Vagina (tissue), 2 donors: ENCODE measurements at regions of chrX and their contacts with region 1.

Region 1: GRCh38 chrX:68710870-68711576 is 63.6 kb downstream of the STARD8 start:
- DNase-seq: no peak
- H3K4me3 ChIP-seq: no peak overlapping the region
- H3K27ac ChIP-seq: no peak overlapping the region
- H3K4me1 ChIP-seq: no peaks in the 10 kb centered on the region
- H3K27me3 ChIP-seq: no peaks in the 10 kb centered on the region
- CTCF ChIP-seq: peak in 1 of 3 experiments; percentile 47
- POLR2A ChIP-seq: no peak

Region 2: GRCh38 chrX:68511255-68511654 is 199.8 kb before region 1 on chrX:
- intact Hi-C with region 1: loop called (anchors 10 kb)
- DNase-seq: no peak
- H3K4me3 ChIP-seq: no peak overlapping the region
- H3K27ac ChIP-seq: no peak overlapping the region
- H3K4me1 ChIP-seq: no peaks in the 10 kb centered on the region
- H3K27me3 ChIP-seq: no peaks in the 10 kb centered on the region
- CTCF ChIP-seq: peak; percentile 43 to 59 (median 58)
- POLR2A ChIP-seq: no peak

Region 3: GRCh38 chrX:68644861-68645260 is 66.2 kb before region 1 on chrX:
- intact Hi-C with region 1: no loop called
- DNase-seq: no peak
- H3K4me3 ChIP-seq: no peak overlapping the region
- H3K27ac ChIP-seq: no peak overlapping the region
- H3K4me1 ChIP-seq: peaks cover 7% of the 10 kb centered on the region
- H3K27me3 ChIP-seq: no peaks in the 10 kb centered on the region
- CTCF ChIP-seq: no peak
- POLR2A ChIP-seq: no peak

Region 4: DNA sequence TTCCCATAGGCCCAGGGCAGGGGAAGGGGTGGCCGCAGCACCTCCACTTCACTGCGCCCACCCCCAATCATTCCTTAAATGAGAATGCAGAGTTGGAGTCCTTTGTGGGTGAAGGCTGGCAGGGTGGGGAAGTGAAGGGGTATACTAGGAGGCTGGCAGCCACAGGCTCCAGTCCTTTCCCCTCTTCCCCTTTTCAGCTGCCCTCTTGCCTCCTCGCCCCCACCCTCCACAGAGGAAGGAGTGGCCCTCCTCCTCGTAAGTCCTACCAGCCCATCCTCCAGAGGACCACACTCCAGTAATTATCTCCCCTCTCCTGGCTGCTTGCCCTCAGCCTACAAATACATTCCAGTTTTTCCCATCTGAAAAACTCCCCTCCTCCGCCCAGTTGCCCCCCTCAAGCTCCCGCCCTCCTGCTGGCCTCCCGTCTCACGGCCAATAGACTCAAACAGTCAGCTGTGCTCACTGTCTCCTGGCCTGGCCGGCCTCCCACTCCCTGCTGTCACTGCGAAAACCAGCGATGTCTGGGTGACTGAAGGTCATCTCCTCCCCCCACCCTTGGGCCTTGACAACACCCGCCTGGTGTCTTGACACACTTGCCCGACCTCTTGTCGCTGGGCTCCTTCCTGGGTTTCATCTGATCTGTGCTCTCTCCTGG is 156.6 kb after region 1 on chrX:
- intact Hi-C with region 1: no loop called
- DNase-seq: no peak
- H3K4me3 ChIP-seq: no peak overlapping the region
- H3K27ac ChIP-seq: no peak overlapping the region
- H3K4me1 ChIP-seq: no peaks in the 10 kb centered on the region
- H3K27me3 ChIP-seq: no peaks in the 10 kb centered on the region
- CTCF ChIP-seq: no peak
- POLR2A ChIP-seq: no peak

Region 5: DNA sequence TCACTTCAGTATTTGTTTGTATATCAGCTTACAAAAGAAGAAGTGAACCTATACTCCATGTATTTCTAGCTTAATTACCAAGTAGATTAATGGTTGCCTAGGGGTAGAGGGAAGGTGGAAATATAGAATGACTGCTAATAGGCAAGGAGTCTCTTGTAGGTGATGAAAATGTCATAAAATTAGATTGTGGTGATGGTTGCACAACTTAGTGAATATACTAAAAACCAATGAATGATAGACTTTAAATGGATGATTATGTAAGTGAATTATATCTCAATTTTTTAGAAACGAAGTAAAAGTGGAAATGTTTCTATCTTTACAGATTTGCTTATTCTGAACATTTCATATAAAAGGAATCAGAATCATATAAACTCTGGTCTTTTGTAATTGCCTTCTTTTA is 1173.2 kb after region 1 on chrX:
- intact Hi-C with region 1: no loop called
- DNase-seq: no peak
- H3K4me3 ChIP-seq: no peak overlapping the region
- H3K27ac ChIP-seq: no peak overlapping the region
- H3K4me1 ChIP-seq: no peaks in the 10 kb centered on the region
- H3K27me3 ChIP-seq: no peaks in the 10 kb centered on the region
- CTCF ChIP-seq: no peak
- POLR2A ChIP-seq: no peak